ENCODE measurements at regions of chr14 and their contacts with region 1.

Region 1: GRCh38 chr14:24678801-24679247 is 44.8 kb upstream of the GZMB start:
- DNase-seq: peak; percentile 78
- H3K4me3 Mint-ChIP-seq: peak overlapping the region; percentile 66
- H3K27ac Mint-ChIP-seq: peak overlapping the region; percentile 38
- H3K4me1 Mint-ChIP-seq: peaks cover 8% of the 10 kb centered on the region
- H3K27me3 Mint-ChIP-seq: peaks cover 56% of the 10 kb centered on the region
- CTCF ChIP-seq: peak; percentile 72

Region 2: DNA sequence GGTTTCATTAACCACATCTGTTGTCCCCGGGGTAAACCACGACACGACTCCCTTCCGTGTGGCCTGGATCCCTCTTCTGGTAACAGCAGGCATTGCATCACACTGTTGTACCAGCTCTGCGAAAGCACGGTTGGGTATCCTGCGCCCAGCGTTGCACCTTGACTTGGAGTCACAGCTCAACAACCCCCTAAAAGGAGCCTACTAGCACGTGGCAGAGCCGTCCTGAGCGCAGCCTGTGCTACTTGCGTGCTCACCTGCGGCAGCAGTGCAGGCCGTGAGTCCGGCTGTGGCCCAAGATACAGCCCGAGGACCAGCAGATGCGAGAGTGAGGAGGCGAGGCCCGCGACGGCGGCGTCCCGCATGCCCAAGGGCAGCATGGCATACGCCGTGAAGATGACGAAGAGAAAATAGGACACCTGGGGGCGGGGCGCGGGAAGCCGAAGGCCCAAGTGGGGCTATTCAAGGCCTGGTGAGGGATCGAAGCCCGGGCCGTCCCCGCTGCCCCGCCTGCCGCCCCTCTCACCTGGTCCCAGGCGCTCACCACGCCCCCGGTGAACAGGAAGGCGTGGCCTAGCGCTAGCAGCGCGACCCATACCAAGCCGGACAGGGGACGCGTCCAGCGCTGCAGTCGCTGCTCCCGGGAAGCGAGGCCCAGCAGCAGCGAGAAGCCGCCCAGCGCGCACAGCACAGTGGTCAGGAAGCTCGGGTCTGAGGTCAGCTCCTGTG is 346.4 kb before region 1 on chr14:
- CTCF ChIA-PET with region 1: no interaction called
- intact Hi-C with region 1: loop called (anchors 5 kb)
- DNase-seq: peak; percentile 79
- H3K4me3 Mint-ChIP-seq: peak overlapping the region; percentile 72
- H3K27ac Mint-ChIP-seq: peak overlapping the region; percentile 52
- H3K4me1 Mint-ChIP-seq: peaks cover 32% of the 10 kb centered on the region
- H3K27me3 Mint-ChIP-seq: no peaks in the 10 kb centered on the region
- CTCF ChIP-seq: peak; percentile 54

Region 3: DNA sequence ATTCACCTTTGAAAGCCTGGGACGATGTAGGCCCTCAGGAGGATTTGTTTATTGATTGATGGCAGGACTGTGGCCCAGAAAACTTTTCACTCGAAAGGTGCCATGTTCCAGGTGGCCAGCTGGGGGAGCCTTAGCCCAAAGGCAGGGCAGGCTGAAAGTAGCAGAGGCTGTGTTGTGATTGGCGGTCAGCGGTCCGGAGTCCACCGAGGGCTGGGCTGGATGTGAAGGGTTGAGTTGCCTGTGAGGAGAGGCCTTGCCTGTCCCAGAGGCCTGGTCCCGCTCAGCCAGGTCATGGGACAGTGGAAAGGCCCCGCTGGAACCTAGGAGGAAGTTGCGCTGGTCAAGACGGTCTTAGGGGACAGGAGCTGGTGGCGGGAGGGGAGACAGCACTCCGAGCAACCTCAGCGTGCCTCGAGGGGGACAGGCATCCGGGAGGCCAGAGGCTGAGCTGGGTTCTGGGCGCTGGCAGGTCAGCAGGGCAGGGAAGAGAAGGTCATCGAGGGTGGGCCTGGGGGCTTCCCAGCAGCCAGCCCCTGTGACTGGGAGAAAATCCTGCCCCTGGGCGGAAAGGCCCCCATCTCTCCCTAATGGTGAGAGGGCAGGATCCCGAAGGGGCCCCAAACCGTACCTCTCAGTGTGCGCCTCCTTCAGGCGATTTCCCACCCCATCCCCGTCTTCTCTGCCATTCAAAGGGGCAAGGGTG is 197.1 kb before region 1 on chr14:
- CTCF ChIA-PET with region 1: no interaction called
- intact Hi-C with region 1: loop called (anchors 10 kb)
- DNase-seq: peak; percentile 68
- H3K4me3 Mint-ChIP-seq: no peak overlapping the region
- H3K27ac Mint-ChIP-seq: no peak overlapping the region
- H3K4me1 Mint-ChIP-seq: no peaks in the 10 kb centered on the region
- H3K27me3 Mint-ChIP-seq: no peaks in the 10 kb centered on the region
- CTCF ChIP-seq: peak; percentile 24

Region 4: GRCh38 chr14:24605435-24606190 is 73.2 kb before region 1 on chr14:
- CTCF ChIA-PET with region 1: no interaction called
- intact Hi-C with region 1: loop called (anchors 1 kb)
- DNase-seq: peak; percentile 61
- H3K4me3 Mint-ChIP-seq: no peak overlapping the region
- H3K27ac Mint-ChIP-seq: no peak overlapping the region
- H3K4me1 Mint-ChIP-seq: no peaks in the 10 kb centered on the region
- H3K27me3 Mint-ChIP-seq: peaks cover 36% of the 10 kb centered on the region
- CTCF ChIP-seq: peak; percentile 74

Region 5: DNA sequence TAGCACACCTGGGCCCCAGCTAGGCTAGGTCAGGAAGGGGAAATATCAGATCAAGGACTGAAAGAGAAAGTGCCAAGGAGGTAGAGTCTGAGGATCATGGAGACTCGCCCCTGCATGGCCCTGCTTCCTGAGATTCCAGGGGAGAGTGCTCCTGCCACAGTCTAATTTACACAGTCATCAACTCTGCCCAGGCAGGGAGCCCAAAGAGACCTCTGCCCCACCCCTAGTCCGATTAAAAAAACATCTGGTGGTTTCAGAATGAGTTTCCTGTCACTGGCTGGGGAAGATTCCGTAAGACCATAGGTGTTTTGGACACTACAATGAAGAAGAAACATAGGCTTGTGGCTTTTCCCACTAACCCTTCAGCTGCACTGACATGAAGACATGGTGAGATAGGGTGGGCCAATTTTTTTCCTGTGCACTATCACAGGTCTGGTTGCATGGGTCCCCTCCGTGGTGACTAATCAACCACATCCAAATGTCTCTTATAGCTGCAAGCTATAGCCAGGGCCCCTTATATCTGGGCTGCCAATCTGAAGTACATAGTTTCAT is 13.3 kb before region 1 on chr14:
- CTCF ChIA-PET with region 1: no interaction called
- intact Hi-C with region 1: no loop called
- DNase-seq: no peak
- H3K4me3 Mint-ChIP-seq: no peak overlapping the region
- H3K27ac Mint-ChIP-seq: no peak overlapping the region
- H3K4me1 Mint-ChIP-seq: no peaks in the 10 kb centered on the region
- H3K27me3 Mint-ChIP-seq: peaks cover 35% of the 10 kb centered on the region
- CTCF ChIP-seq: no peak

Measured in Calu3 (cell line).